ENCODE measurements at regions of chr2 and their contacts with region 1.

Region 1: GRCh38 chr2:231037731-231038482 is 584 bp downstream of the C2orf72 start:
- DNase-seq: no peak
- H3K4me3 ChIP-seq: peak overlapping the region in 5 of 7 experiments; percentile 15 to 52 (median 39)
- H3K27ac ChIP-seq: no peak overlapping the region
- H3K4me1 ChIP-seq: peaks cover 0 to 22% (median 11%) of the 10 kb centered on the region in 4 experiments
- H3K27me3 ChIP-seq: peaks cover 9 to 61% (median 37%) of the 10 kb centered on the region in 5 experiments

Region 2: DNA sequence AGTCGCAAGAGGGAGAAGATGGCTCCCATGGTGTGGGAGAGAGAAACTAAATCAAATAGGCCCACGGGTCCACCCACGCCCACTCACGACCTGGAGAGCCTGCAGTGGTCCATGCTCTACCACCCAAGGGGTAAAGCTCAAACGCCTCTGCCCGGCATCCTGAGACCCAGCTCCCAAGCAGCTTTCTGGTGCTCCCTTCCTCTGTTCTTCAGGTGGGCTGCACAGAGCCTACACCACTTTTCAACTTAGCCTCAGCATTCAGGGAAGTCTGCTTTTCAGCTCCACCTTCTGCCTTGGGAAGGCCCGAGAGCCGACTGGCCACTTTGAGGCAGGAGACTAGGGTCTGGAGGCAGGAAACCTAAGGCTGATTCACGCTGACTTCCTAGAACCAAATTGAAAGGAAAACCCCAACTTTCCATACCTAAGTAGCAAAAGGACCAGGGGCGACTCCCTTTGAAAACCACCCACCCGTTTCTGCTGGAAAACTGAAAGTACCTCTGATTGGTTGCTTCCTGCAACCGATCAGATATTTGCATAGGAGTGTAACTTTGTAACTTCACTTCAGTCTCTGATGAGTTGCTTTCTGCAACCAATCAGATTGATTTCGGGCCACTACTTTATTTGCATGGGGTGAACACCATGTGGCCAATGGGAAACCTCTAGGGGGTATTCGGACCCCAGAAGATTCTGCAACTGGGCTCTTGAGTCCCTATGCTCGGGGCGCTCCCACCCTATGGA is 68.8 kb before region 1 on chr2:
- CTCF ChIA-PET with region 1: no interaction called
- POLR2A ChIA-PET with region 1: no interaction called
- DNase-seq: no peak
- H3K4me3 ChIP-seq: peak overlapping the region in 1 of 7 experiments; percentile 23
- H3K27ac ChIP-seq: no peak overlapping the region
- H3K4me1 ChIP-seq: peaks cover 0 to 5% (median 3%) of the 10 kb centered on the region in 4 experiments
- H3K27me3 ChIP-seq: no peaks in the 10 kb centered on the region

Region 3: DNA sequence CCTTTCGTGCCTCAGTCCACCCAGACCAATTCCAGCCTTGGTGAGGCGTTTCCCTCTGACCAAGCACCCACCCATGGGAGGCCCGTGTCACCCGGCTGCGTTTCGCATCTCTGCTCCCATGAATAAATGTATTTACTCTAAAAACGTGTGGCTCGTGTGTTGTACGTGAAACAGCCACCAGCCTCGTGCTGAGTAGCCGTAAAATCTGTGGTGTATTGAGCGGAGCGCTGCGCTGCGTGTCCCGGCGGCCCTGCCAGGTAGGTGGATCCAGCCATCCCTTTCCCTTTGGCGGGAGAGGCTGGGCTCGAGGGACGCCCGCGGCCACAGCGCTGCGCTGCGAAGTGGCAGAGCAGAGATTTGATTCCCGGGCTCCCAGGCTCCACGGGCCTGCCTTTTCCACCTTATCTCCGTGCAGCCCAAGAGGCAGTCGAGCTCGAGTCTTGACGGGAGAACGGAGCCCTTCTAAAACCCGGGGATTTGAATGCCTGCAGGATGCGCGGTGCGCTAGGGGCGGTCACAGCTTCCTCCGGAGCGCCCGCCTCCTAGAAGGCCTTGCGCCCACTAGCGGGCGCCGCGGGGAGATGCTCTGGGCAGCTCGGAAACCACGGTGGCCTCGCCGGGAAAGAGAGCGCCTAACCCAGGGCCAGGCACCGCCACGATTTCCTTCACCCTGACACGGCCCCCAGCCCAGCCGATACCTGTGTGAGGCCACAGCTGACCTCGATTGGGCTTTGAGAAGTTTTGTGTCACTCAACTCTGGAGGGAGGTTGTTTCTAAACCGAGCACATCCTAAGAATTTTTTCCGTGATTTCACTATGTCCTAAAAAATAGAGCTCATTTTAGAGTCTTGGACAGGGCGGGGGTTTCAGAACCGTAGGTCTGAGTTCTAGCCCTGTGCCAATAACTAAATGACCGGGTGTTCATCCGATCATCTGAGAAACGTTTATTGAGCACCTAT is 14.9 kb after region 1 on chr2:
- CTCF ChIA-PET with region 1: interaction called, 18 read pairs
- POLR2A ChIA-PET with region 1: no interaction called
- DNase-seq: peak; percentile 80 to 89 (median 89)
- H3K4me3 ChIP-seq: peak overlapping the region; percentile 61 to 88 (median 65)
- H3K27ac ChIP-seq: no peak overlapping the region
- H3K4me1 ChIP-seq: peaks cover 5 to 23% (median 16%) of the 10 kb centered on the region in 4 experiments
- H3K27me3 ChIP-seq: peaks cover 0 to 16% (median 11%) of the 10 kb centered on the region in 5 experiments